AG04450 (cell line): ENCODE measurements at regions of chr9 and their contacts with region 1.

Region 1: GRCh38 chr9:136944519-136945279 is at the starts of genes C8G and FBXW5:
- DNase-seq: peak; percentile 74
- H3K4me3 ChIP-seq: peak within 1 kb of the TSS; percentile 78
- H3K27ac ChIP-seq: peak within 1 kb of the TSS; percentile 61
- H3K27me3 ChIP-seq: no peaks in the 10 kb centered on the region
- CTCF ChIP-seq: peak; percentile 86
- polyA plus RNA-seq, gene C8G: 0.41 TPM in 1 of 2 replicates, not detected in the other
- polyA plus RNA-seq, gene FBXW5: 31.2 and 46.4 TPM in 2 replicates

Region 2: GRCh38 chr9:137064027-137064879 is 119.6 kb after region 1 on chr9:
- CTCF ChIA-PET with region 1: interaction called, 22 read pairs
- POLR2A ChIA-PET with region 1: no interaction called
- DNase-seq: no peak
- H3K4me3 ChIP-seq: no peak overlapping the region
- H3K27ac ChIP-seq: no peak overlapping the region
- H3K27me3 ChIP-seq: peaks cover 2% of the 10 kb centered on the region
- CTCF ChIP-seq: peak; percentile 85